ENCODE measurements at regions of chr4 and their contacts with region 1.

Region 1: DNA sequence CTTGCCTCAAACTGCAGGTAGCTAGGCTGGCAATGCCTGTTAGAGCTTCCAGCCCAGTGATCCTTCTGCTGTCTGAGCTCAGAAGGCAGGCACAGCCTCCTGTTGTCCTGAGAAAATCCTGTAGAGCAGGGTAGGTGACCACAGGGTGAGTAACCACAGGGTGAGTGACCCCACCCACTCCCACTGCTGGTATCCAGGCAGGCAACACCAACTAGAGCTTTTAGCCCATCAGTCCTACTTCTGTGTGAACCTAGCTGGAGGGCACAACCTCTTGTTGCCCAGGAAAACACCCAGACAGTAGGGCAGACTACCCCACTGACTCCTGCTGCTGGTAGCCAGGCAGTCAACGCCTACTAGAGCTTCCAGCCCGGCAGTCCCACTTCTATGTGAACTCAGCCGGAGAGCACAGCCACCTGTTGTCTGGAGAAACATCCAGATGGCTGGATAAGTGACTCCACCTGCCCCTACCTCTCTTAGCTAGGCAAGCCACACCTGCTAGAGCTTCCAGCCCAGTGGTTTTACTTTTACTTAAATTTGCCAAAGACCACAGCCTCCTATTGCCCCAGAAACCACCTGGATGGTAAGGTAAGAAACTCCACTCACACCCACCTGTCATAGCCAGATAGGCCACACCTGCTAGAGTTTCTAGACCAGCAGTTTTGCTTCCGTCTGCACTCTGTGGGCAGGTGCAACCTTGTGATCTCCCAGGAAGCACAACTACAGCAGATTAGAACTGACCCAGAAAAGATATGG is 371.6 kb downstream of the INPP4B start:
- DNase-seq: peak; percentile 93 to 98
- H3K4me3 ChIP-seq: peak overlapping the region; percentile 74; the same call in 1 of the 2 replicates
- H3K27ac ChIP-seq: peak overlapping the region; percentile 100
- H3K4me1 ChIP-seq: peaks cover 57% of the 10 kb centered on the region
- H3K27me3 ChIP-seq: no peaks in the 10 kb centered on the region
- CTCF ChIP-seq: no peak

Region 2: DNA sequence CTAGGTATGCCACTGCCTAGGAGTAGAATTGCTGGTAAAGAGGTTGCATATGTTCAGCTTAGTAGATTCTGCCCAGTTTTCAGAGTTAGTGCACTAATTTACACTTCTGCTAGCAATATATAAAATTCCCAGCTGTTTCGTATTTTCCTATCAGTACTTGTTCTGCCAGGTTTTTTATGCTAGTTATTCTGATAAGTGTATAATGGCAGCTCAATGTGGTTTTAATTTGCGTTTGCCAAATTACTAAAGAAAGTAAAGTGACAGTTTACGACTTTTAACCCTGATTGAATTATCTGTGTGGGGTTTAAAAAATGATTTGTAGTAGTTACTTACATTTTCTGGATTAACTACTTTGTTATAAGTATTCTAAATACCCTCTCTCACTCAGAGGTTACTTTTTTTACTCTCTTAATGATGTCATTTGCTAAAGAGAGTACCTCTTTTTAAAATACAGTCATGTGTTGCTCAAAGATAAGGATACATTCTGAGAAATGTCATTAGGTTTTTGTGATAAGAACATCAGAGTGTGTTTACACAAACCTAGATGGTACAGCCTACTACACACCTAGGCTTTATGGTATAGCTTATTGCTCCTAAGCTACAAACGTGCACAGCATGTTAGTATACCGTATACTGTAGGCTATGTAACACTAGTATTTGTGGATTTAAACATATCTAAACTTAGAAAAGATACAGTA is 474.9 kb before region 1 on chr4:
- CTCF ChIA-PET with region 1: no interaction called
- POLR2A ChIA-PET with region 1: no interaction called
- intact Hi-C with region 1: no loop called
- DNase-seq: no peak
- H3K4me3 ChIP-seq: no peak overlapping the region
- H3K27ac ChIP-seq: no peak overlapping the region
- H3K4me1 ChIP-seq: no peaks in the 10 kb centered on the region
- H3K27me3 ChIP-seq: no peaks in the 10 kb centered on the region
- CTCF ChIP-seq: no peak

Region 3: DNA sequence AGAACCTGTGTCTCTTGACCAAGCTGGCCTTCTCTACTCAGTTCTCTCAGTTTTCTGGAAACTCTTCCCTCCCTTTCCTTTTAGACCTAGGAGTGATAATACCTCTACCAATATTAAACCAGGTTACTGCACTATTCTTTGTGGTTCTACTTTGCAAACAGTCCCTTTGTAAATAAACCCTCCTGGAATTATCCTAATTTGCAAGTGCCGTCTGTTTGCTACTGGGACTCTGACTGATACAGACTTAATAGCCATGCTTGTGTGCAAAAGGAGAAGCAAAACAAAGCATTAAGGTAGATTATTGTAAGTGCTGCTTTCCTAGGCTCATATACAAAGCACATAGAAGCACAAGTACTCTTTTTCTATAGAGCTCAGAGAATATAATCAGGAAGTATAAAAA is 135.5 kb before region 1 on chr4:
- CTCF ChIA-PET with region 1: no interaction called
- POLR2A ChIA-PET with region 1: no interaction called
- intact Hi-C with region 1: no loop called
- DNase-seq: no peak
- H3K4me3 ChIP-seq: no peak overlapping the region
- H3K27ac ChIP-seq: no peak overlapping the region
- H3K4me1 ChIP-seq: no peaks in the 10 kb centered on the region
- H3K27me3 ChIP-seq: no peaks in the 10 kb centered on the region
- CTCF ChIP-seq: no peak

Region 4: GRCh38 chr4:142353149-142353738 is 121.3 kb before region 1 on chr4:
- CTCF ChIA-PET with region 1: interaction called, 3 read pairs
- POLR2A ChIA-PET with region 1: no interaction called
- intact Hi-C with region 1: loop called (anchors 1 kb)
- DNase-seq: peak; percentile 6 to 62
- H3K4me3 ChIP-seq: no peak overlapping the region
- H3K27ac ChIP-seq: peak overlapping the region; percentile 38; the same call in 1 of the 2 replicates
- H3K4me1 ChIP-seq: peaks cover 33% of the 10 kb centered on the region
- H3K27me3 ChIP-seq: no peaks in the 10 kb centered on the region
- CTCF ChIP-seq: peak; percentile 83

Region 5: GRCh38 chr4:142463206-142463605 is 11.3 kb before region 1 on chr4:
- CTCF ChIA-PET with region 1: no interaction called
- POLR2A ChIA-PET with region 1: no interaction called
- intact Hi-C with region 1: no loop called
- DNase-seq: no peak
- H3K4me3 ChIP-seq: no peak overlapping the region
- H3K27ac ChIP-seq: no peak overlapping the region
- H3K4me1 ChIP-seq: peaks cover 10% of the 10 kb centered on the region; the same call in 1 of the 2 replicates
- H3K27me3 ChIP-seq: no peaks in the 10 kb centered on the region
- CTCF ChIP-seq: no peak

Region 6: GRCh38 chr4:142516670-142517526 is 42.4 kb after region 1 on chr4:
- CTCF ChIA-PET with region 1: no interaction called
- POLR2A ChIA-PET with region 1: no interaction called
- intact Hi-C with region 1: loop called (anchors 2 kb)
- DNase-seq: peak; percentile 6 to 75
- H3K4me3 ChIP-seq: no peak overlapping the region
- H3K27ac ChIP-seq: peak overlapping the region; percentile 72
- H3K4me1 ChIP-seq: peaks cover 21% of the 10 kb centered on the region
- H3K27me3 ChIP-seq: no peaks in the 10 kb centered on the region
- CTCF ChIP-seq: no peak

Region 7: GRCh38 chr4:142719854-142720541 is 245.5 kb after region 1 on chr4:
- CTCF ChIA-PET with region 1: interaction called, 6 read pairs
- POLR2A ChIA-PET with region 1: no interaction called
- intact Hi-C with region 1: loop called (anchors 1 kb)
- DNase-seq: peak in 1 of 2 experiments; percentile 65
- H3K4me3 ChIP-seq: no peak overlapping the region
- H3K27ac ChIP-seq: peak overlapping the region; percentile 64
- H3K4me1 ChIP-seq: peaks cover 16% of the 10 kb centered on the region
- H3K27me3 ChIP-seq: no peaks in the 10 kb centered on the region
- CTCF ChIP-seq: peak; percentile 63

Region 8: DNA sequence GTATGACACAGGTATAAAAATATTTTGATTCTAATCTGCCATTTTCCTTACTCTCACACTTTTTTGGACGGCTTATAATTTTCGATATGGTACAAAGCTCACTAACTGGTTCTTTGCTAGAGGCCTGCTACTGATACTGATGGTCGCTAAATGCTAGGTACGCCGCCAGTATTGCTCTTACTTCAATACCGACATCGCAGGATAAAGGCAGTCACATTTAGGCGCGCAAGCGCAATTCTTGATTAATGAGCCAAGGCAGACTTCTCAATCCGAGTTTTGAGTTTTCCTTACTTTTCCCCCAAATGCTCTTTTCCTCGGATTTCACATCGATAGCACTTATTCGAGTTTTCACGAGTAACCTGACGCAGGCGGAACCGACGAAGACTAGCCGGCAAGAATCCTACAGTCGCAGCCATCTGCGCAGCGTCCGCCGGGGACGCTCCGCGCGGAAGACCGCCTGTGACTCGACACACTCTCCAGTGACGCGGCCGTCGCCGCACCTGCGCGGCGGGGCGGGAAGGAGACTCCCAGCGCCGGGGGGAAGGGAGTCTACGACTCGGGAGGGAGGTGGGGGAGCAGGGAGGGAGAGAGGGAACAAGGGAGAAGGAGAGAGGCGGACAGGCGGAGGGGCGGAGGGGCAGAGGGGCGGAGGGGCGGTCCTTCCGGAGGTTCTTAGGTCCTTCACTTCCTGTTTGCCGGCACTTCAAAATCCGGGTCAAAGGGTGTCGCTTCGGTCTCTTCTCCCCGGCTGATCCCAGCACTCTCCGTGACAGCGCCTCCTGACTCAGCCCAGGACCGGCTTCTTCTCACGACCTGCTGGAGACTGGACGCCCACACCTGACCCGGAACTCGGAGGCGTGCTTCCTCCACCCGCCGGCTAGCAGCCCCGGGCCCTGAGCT is 710.0 kb after region 1 on chr4 and contains the start of gene USP38:
- CTCF ChIA-PET with region 1: no interaction called
- POLR2A ChIA-PET with region 1: no interaction called
- intact Hi-C with region 1: loop called (anchors 10 kb)
- DNase-seq: peak; percentile 88 to 89
- H3K4me3 ChIP-seq: peak within 1 kb of the TSS; percentile 92
- H3K27ac ChIP-seq: peak within 1 kb of the TSS; percentile 89
- H3K4me1 ChIP-seq: peaks cover 32% of the 10 kb centered on the region
- H3K27me3 ChIP-seq: no peaks in the 10 kb centered on the region
- CTCF ChIP-seq: no peak
- total RNA-seq, gene USP38: 11.9 and 12.3 TPM in 2 replicates

Measured in PC-9 (cell line).